Mammary epithelial cell (primary cell): ENCODE measurements at regions of chr12 and their contacts with region 1.

Region 1: DNA sequence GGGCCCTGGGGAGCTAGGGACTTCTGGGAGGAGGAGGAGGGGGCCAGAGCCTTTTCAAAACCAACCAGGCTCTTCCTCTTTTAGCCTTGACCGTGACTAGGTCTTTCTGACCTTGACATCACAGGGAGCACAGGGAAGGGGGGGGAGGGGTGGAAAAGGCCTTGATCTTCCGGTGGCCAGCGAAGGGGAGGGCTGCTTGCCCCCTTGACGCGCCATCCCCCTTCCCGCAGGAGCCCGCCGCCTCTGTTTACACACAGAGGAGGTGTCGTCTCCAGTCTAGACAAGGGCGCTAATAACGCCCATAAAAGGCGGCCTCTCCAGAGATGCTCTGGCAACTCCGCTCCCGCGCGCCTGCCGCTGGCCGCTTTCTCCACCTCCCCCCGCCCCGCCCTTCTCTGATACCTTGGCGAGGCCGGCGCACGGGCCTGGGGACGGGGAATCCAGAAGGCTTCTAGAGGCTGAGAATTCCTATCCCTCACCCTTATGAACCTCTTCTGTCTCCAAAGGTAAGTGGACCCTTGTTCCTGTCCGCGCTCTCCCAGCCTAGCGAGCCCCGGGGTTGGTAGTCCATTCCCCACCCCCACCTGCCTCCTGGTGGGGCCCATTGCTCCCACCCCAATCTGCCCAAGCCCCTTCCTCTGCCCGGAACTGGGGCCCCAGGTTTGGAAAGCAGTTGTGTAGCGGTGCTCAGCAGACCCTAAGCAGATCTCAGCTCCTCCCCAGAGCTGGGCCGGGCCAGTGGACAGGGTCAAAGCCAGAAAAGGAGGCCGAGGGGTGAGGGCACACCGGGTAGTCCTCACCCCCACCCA is 4.9 kb upstream of the HOXC12 start:
- DNase-seq: no peak
- H3K4me3 ChIP-seq: no peak overlapping the region
- H3K27ac ChIP-seq: no peak overlapping the region
- H3K4me1 ChIP-seq: peaks cover 9% of the 10 kb centered on the region
- H3K27me3 ChIP-seq: peaks cover 10% of the 10 kb centered on the region
- CTCF ChIP-seq: no peak

Region 2: GRCh38 chr12:53791735-53792326 is 158.0 kb before region 1 on chr12:
- CTCF ChIA-PET with region 1: no interaction called
- dilution Hi-C with region 1: no loop called
- in situ Hi-C with region 1: loop called in 1 of 2 experiments (anchors 10 kb)
- intact Hi-C with region 1: loop called (anchors 1 kb)
- DNase-seq: peak; percentile 26
- H3K4me3 ChIP-seq: no peak overlapping the region
- H3K27ac ChIP-seq: no peak overlapping the region
- H3K4me1 ChIP-seq: no peaks in the 10 kb centered on the region
- H3K27me3 ChIP-seq: no peaks in the 10 kb centered on the region
- CTCF ChIP-seq: peak; percentile 48 to 68